ENCODE measurements at regions of chr10 and their contacts with region 1.

Region 1: DNA sequence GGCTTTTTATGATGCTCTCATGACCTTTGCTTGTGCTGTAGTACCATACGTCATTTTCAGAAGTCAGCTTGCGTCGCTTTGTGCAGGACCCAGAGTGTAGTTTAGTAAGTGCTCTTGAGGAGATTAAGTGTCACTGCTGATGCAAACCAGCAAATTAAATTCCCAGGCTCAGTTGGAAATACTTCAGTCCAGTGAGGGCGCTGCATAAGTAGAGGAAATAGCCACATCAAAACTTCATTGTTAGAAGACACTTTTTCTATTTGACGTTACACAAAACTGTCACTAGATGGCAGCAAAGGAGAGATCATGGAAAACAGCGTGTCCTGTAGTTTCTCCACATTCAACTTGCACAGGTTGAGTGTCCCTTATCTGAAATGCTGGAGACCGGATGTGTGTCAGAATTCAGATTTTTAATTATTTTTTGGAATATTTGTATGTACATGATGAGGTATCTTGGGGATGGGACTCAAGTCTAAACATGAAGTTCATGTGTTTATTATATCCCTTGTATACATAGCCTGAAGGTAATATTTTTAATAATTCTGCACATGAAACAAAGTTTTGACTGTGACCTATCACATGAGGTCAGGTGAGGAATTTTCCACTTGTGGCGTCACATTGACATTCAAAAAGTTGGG is 7.9 kb downstream of the ZNF22 start:
- DNase-seq: peak; percentile 54 to 84
- H3K4me3 ChIP-seq: no peak overlapping the region
- H3K27ac ChIP-seq: no peak overlapping the region
- H3K4me1 ChIP-seq: no peaks in the 10 kb centered on the region
- H3K27me3 ChIP-seq: no peaks in the 10 kb centered on the region
- CTCF ChIP-seq: peak; percentile 92

Region 2: DNA sequence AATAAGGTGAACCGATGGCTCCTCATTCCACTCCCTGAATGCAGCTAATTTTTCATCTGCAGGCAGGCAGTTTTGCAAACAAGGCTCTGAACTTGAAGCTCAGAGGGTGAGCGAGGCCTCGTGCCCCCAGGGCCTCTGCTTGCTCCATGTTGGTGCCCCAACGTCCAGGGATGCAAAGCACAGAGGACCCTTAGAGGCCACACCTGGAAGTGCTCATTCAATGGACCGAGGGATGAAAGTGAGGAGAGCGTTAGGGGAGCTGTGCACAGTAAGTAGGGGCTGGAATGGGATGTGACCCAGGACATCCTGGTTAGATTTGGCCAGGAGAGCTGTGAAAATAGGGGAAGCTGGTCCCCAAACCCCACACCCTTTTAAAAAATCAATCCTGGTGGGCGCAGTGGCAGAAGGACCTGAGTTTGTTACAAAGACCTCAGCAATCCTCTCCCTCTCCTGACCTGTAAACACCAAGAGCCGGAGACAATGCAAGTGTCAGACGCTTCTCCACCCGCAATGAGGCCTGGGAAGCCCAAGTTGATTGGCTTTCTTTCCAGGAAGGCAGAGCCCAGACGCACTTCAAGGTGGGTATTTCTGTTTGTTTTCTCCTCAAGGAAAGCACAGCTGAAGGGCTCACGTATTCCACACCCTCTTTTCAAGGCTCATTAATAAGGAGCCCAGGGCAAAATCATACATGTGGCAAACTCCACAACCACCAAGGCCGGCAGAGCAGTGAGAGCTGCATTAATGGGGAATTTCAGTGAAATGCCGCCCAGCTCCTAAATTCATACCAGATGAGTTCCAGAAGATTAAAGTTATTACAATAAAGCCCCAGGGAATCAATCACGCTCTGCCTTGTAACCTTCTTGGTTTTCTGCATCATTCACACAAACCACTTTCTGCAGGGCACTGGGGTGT is 609.6 kb before region 1 on chr10:
- CTCF ChIA-PET with region 1: no interaction called
- POLR2A ChIA-PET with region 1: interaction called, 15 read pairs
- intact Hi-C with region 1: no loop called
- DNase-seq: no peak
- H3K4me3 ChIP-seq: no peak overlapping the region
- H3K27ac ChIP-seq: no peak overlapping the region
- H3K4me1 ChIP-seq: no peaks in the 10 kb centered on the region
- H3K27me3 ChIP-seq: peaks cover 61% of the 10 kb centered on the region
- CTCF ChIP-seq: no peak

Region 3: DNA sequence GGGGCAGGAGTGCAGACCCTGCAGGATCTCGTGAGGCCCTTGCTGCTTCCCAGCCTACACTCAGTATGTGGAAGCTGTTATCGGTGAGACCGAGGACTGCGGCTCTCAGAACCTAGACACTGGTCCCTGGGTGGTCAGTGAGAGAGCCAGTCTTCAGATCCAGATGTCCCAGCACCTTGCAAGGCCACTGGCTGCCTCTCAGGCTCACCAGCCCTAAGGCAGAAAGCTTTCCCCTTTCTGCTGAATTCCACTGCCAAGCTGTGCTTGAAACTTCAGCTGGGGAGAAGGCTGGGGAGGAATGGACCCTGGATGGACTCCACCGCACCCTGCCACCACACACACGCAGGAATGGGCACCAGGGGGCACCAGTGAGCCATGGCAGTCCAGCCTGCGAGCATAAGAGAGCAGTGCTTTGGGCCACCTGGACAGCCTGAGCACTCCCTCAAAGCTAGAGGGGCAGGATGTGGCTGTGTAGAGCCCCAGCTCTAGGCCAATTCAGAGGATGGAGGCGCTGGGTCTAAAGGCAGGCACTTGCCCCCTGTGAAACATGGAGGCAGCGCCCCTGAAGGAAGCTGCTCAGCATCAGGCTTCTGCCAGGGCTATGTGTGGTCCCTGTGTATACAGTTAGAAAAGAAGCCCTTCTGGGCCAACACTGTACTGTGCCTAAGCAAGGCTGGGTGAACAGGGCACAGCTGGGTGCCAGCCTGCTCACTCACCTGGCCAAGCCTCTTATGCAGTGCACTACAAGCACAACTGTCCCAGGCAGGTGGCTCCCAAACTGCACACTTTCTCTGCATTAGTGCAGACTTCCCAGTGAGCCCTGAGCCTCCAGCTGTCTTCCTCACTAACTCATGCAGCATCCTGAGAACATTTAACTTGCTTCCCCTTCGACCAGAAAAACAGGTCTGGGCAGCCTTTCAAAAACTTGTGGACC is 75.9 kb before region 1 on chr10:
- CTCF ChIA-PET with region 1: no interaction called
- POLR2A ChIA-PET with region 1: no interaction called
- intact Hi-C with region 1: loop called (anchors 2 kb)
- DNase-seq: peak; percentile 52 to 86
- H3K4me3 ChIP-seq: no peak overlapping the region
- H3K27ac ChIP-seq: no peak overlapping the region
- H3K4me1 ChIP-seq: no peaks in the 10 kb centered on the region
- H3K27me3 ChIP-seq: 0 out of 2 replicates have a peak, but pooled peaks cover 6% of the 10 kb centered on the region
- CTCF ChIP-seq: peak; percentile 97

Measured in PC-9 (cell line).